ENCODE measurements at regions of chr22 and their contacts with region 1.

Region 1: GRCh38 chr22:36470162-36470993 is 11.1 kb downstream of the TXN2 start:
- DNase-seq: peak; percentile 89
- ATAC-seq: peak; percentile 94
- H3K4me3 Mint-ChIP-seq: no peak overlapping the region
- H3K27ac Mint-ChIP-seq: peak overlapping the region; percentile 72
- H3K4me1 Mint-ChIP-seq: peaks cover 29% of the 10 kb centered on the region
- H3K27me3 Mint-ChIP-seq: no peaks in the 10 kb centered on the region

Region 2: DNA sequence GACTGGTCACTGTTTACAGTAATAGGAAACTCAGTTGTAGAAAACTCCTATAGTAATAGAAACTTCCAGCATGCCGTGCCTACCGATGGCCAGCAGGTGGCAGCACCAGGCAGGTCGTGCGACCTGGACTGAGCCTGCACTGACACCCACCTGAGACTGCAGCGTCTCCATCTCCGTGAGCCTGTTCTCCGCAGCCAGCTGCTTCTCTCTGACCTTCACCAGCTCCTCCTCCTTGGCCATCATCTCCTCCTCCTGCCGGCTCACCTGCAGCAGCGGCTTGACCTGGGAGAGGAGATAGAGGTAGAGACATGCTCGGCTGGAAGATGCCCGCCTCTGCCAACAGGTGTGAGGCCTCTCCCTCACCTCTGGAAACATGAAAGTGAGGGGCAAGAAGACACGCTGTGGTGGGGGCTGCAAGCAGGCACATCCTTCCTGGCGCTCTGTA is 169.0 kb before region 1 on chr22:
- CTCF ChIA-PET with region 1: interaction called, 71 read pairs
- POLR2A ChIA-PET with region 1: interaction called, 4 read pairs
- intact Hi-C with region 1: loop called (anchors 1 kb)
- DNase-seq: peak; percentile 90
- ATAC-seq: peak; percentile 82
- H3K4me3 Mint-ChIP-seq: no peak overlapping the region
- H3K27ac Mint-ChIP-seq: peak overlapping the region; percentile 72
- H3K4me1 Mint-ChIP-seq: peaks cover 7% of the 10 kb centered on the region
- H3K27me3 Mint-ChIP-seq: no peaks in the 10 kb centered on the region

Region 3: DNA sequence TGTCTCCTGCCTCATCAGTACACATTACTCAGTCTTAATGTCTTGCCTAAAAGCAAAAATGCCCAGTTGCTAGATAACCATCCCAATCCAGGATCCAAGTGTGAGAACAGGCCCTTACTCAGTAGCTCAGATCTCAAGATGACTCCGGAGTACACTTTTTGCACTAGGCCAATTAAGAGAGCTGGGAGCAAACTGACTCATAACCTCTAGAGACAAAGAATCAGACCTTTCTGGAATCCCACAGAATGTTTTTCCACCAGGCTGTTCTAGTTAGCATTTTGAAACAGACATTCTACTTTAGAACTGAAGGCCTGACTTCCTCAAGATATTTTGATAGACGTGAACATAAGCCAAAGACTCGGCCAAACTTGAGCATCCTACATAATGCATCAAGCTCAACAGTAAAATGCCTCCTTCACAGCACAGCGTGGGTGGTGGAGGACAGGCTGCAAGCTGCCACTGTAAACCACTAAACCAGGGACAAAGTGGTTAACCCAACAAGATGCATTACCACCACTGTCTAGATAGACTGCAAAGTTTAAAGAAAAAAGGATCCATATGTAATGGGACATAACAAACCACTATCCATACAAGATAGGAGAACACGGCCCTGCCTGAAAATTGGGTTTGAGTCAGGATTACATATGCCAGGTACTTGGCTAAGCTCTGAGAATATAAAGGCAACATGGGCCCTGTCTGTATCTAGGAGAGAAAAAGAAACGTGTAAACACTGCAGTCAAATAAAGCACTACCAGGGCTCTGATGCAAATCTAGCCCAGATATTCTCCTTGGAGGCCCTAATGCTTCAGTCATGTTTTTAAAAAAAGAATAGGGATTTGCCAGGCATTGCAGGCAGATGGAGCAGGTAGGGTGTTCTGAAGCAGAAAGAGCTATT is 131.0 kb before region 1 on chr22:
- CTCF ChIA-PET with region 1: interaction called, 16 read pairs
- POLR2A ChIA-PET with region 1: interaction called, 4 read pairs
- intact Hi-C with region 1: no loop called
- DNase-seq: peak; percentile 74
- ATAC-seq: peak; percentile 62
- H3K4me3 Mint-ChIP-seq: peak overlapping the region; percentile 7
- H3K27ac Mint-ChIP-seq: peak overlapping the region; percentile 75
- H3K4me1 Mint-ChIP-seq: peaks cover 93% of the 10 kb centered on the region
- H3K27me3 Mint-ChIP-seq: no peaks in the 10 kb centered on the region

Region 4: DNA sequence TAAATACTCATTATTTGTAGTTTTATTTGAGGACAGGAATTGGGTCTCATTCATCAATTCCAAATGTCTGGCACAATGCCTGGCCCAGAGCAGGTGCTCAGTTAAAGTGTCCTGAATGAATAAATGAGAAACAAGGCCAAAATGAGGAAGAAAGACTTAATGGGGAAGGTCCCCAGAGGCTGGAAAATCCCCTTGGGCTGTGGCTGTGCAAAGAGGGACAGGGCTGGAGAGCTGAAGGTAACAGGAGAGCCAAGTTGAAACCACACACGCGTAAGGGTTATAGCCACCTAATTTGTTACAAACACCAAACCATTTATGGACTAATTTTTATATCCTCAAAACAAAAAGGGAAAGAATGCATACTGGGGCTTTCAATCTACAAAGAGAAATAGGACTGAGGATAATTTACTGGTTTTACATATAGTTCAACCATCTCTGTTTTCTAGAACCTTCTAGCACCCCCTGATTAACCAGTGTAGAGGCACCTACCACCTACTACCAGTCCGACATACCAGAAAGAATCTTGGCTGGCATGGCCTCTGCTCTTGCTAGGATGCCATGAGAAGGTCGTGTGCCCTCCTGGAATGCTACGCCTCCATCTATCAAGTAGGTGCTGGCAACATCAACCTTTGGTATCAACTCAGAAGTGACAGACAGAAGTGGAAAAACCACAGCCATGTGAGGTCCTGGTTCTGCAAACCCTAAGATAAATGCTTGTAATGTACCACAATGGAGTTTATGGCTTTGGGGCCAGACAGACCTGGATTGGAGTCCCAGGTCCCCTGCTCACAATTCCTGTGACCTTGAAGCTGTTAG is 111.0 kb before region 1 on chr22:
- CTCF ChIA-PET with region 1: interaction called, 11 read pairs
- POLR2A ChIA-PET with region 1: no interaction called
- intact Hi-C with region 1: no loop called
- DNase-seq: no peak
- ATAC-seq: no peak
- H3K4me3 Mint-ChIP-seq: peak overlapping the region; percentile 45
- H3K27ac Mint-ChIP-seq: peak overlapping the region; percentile 96
- H3K4me1 Mint-ChIP-seq: peaks cover 98% of the 10 kb centered on the region
- H3K27me3 Mint-ChIP-seq: no peaks in the 10 kb centered on the region

Region 5: DNA sequence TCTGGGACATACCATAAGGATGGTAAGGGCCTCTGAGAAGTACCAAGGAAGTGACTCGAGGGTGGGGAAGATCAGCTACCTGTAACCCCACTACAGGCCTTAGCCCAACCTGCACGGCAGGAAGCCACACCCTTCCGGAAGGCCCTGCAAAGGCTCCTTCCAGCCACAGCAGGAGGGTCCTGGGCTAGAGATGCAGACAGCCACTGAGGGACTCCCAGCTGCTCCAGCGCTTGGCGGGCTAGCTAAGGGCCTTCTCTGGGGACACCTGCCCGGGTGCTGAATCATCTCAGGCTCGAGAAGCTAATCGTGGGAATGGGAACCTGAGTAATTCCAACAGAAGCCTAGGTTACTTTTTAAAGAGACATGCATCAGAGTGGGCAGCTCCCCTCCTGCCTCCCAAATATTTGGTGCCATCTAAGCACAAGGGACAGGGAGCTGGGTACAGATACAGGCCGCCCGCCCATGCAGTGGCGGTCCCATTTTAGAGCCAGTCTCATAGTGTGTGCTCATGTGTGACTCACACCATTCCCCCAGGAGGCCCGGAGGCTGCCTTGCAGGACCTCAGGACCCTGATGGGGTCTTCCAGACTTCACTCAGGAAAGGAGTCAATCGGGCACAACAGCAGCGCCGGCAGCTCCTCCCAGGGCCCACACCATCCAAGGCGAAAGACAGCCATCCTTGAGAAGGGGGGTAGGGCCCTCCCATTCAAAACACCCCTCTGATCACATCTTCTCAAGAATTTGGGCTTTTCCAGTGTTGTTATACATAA is 90.6 kb before region 1 on chr22:
- CTCF ChIA-PET with region 1: interaction called, 7 read pairs
- POLR2A ChIA-PET with region 1: no interaction called
- intact Hi-C with region 1: loop called in 1 of 2 experiments (anchors 2 kb)
- DNase-seq: peak; percentile 62
- ATAC-seq: peak; percentile 13
- H3K4me3 Mint-ChIP-seq: peak overlapping the region; percentile 75
- H3K27ac Mint-ChIP-seq: peak overlapping the region; percentile 99
- H3K4me1 Mint-ChIP-seq: peaks cover 92% of the 10 kb centered on the region
- H3K27me3 Mint-ChIP-seq: no peaks in the 10 kb centered on the region

Region 6: DNA sequence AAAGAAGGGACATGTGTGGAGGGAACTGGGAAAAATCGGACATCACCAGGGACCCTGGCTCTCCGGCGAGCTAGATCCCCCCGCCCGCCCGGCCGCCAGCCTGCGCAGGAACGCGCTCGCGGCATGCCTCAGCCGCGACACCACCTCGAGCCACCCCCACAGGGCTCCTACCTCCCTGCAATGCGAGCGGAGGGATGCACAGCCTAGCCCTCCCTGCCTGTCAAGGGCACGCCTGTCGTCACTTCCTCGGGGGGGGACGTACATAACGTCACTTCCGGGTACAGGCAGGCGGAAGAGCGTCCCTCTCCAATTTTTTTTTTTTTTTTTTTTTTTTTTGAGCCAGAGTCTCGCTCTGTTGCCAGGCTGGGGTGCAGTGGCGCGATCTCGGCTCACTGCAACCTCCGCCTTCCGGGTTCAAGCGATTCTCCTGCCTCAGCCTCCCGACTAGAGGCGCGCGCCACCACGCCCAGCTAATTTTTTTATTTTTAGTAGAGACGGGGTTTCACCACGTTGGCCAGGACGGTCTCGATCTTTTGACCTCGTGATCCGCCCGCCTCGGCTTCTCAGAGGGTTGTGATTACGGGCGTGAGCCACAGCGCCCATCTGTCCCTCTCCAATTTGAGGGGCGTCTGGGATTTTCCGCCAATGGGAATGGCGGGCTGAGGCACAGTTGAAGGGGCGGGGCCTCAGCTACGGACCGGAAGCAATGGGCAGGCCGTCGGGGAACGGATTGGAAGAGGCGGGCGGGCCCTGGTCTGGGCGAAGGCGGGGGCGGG is 11.2 kb after region 1 on chr22 and contains the start of gene TXN2:
- CTCF ChIA-PET with region 1: interaction called, 12 read pairs
- POLR2A ChIA-PET with region 1: interaction called, 3 read pairs
- intact Hi-C with region 1: no loop called
- DNase-seq: peak; percentile 97
- ATAC-seq: peak; percentile 89
- H3K4me3 Mint-ChIP-seq: peak within 1 kb of the TSS; percentile 81
- H3K27ac Mint-ChIP-seq: peak within 1 kb of the TSS; percentile 94
- H3K4me1 Mint-ChIP-seq: peaks cover 19% of the 10 kb centered on the region
- H3K27me3 Mint-ChIP-seq: no peaks in the 10 kb centered on the region
- total RNA-seq, gene TXN2: 95.5 to 99.1 TPM

Region 7: DNA sequence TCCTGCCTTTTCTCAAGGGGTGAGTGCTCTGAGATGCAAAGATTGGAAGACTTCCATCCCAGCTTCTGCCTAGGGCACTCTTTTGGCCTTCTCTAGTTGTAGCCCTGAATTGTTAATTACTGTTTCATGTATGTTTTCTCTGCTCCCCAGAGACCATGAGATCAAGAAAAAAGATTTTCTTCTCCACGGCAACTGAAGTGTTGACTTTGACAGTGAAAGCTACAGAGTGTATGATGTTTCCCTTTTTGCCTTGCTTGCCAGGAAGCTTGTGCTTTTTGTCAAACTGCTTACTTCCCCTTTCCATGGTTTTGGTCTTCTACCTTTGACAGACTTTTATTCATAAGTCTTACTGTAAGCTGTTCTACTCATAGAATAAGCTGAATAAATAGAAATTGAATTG is 81.9 kb after region 1 on chr22:
- CTCF ChIA-PET with region 1: no interaction called
- POLR2A ChIA-PET with region 1: no interaction called
- intact Hi-C with region 1: no loop called
- DNase-seq: no peak
- ATAC-seq: no peak
- H3K4me3 Mint-ChIP-seq: no peak overlapping the region
- H3K27ac Mint-ChIP-seq: no peak overlapping the region
- H3K4me1 Mint-ChIP-seq: no peaks in the 10 kb centered on the region
- H3K27me3 Mint-ChIP-seq: peaks cover 6% of the 10 kb centered on the region